CD4-positive, alpha-beta memory T cell (primary cell): ENCODE measurements at regions of chr15 and their contacts with region 1.

Region 1: GRCh38 chr15:60751985-60752952 is 273.3 kb upstream of the ICE2 start:
- DNase-seq: no peak
- H3K4me3 ChIP-seq: no peak overlapping the region
- H3K4me3 Mint-ChIP-seq: no peak overlapping the region
- H3K27ac ChIP-seq: no peak overlapping the region
- H3K27ac Mint-ChIP-seq: no peak overlapping the region
- H3K4me1 ChIP-seq: no peaks in the 10 kb centered on the region
- H3K4me1 Mint-ChIP-seq: peaks cover 0 to 5% (median 4%) of the 10 kb centered on the region in 4 donors
- H3K27me3 ChIP-seq: no peaks in the 10 kb centered on the region
- H3K27me3 Mint-ChIP-seq: no peaks in the 10 kb centered on the region

Region 2: DNA sequence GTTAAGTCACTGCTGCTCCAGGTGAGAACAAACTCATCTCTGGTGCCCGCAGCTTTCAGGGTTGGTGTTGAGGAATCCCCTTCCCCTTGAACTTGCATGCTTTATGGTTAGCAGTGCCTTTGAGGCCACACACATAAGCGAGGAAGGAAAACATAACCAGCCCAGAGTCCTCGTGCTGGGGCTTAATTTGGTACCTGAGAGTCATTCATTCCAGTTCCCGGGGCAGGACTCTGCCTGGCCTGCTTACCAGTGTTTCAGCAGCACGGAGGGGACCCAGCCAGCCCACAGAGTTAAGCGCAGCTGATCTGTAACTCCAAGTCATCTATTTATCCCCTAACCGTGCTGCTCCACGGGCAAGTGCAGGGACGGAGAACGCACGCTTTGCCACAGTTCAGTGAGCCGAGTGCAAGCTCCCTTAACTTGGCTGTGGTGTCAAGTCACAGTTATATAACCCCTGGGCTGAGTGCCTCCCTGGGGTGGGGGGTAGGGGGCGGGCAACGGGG is 29.0 kb after region 1 on chr15:
- CTCF ChIA-PET with region 1: no interaction called
- POLR2A ChIA-PET with region 1: no interaction called
- intact Hi-C with region 1: no loop called
- DNase-seq: peak in 1 of 5 donors; percentile 14
- H3K4me3 ChIP-seq: no peak overlapping the region
- H3K4me3 Mint-ChIP-seq: peak overlapping the region in 6 of 8 donors; percentile 9 to 73 (median 36)
- H3K27ac ChIP-seq: peak overlapping the region; percentile 14
- H3K27ac Mint-ChIP-seq: peak overlapping the region in 5 of 7 donors; percentile 8 to 91 (median 68)
- H3K4me1 ChIP-seq: peaks cover 45% of the 10 kb centered on the region
- H3K4me1 Mint-ChIP-seq: peaks cover 25 to 48% (median 45%) of the 10 kb centered on the region in 4 donors
- H3K27me3 ChIP-seq: no peaks in the 10 kb centered on the region
- H3K27me3 Mint-ChIP-seq: no peaks in the 10 kb centered on the region

Region 3: DNA sequence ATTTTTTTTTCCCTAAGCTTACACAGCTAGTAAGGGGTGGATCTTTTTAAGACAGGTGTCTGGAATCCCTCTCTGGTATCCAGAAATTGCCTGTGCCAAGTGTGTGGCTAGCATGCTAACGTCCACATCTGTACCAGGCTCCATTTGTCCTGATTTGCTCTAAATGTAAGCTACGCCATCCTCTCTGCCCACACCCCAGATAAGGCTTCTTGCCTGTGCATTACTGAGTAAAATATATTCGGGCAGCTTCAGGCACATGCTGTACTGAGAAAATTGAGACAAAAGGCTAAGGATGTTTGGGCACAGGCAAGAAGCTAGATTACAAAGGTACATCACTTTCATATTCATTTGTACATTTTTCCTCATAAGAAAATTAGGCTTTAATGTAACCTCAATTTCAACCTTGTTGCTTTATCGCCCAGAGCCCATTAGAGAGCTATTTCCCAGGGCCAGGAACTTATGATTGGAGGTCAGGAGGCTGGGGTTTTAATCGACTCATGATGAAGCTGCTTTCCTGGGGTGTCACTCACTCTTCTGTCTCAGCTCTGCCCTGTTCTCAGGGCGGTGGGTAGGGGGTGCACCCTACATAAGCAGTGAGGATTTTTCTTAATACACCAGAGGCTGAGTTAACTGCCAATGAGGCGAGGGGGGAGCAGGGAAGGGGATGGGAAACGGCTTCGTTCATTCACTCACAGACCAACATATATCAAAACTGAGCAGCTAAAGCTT is 370.5 kb after region 1 on chr15:
- CTCF ChIA-PET with region 1: no interaction called
- POLR2A ChIA-PET with region 1: no interaction called
- intact Hi-C with region 1: loop called (anchors 10 kb)
- DNase-seq: no peak
- H3K4me3 ChIP-seq: no peak overlapping the region
- H3K4me3 Mint-ChIP-seq: no peak overlapping the region
- H3K27ac ChIP-seq: no peak overlapping the region
- H3K27ac Mint-ChIP-seq: no peak overlapping the region
- H3K4me1 ChIP-seq: no peaks in the 10 kb centered on the region
- H3K4me1 Mint-ChIP-seq: no peaks in the 10 kb centered on the region
- H3K27me3 ChIP-seq: no peaks in the 10 kb centered on the region
- H3K27me3 Mint-ChIP-seq: peaks cover 17 to 31% of the 10 kb centered on the region in 2 donors